Adrenal gland (tissue), 19 donors: ENCODE measurements at regions of chr1 and their contacts with region 1.

Region 1: GRCh38 chr1:244599937-244600350 is 53.0 kb upstream of the DESI2 start:
- DNase-seq: peak; percentile 60 to 78 (median 72)
- H3K4me3 ChIP-seq: peak overlapping the region in 1 of 4 donors; percentile 32
- H3K27ac ChIP-seq: peak overlapping the region in 3 of 5 donors; percentile 62 to 79 (median 73)
- H3K4me1 ChIP-seq: no peaks in the 10 kb centered on the region
- H3K27me3 ChIP-seq: no peaks in the 10 kb centered on the region
- CTCF ChIP-seq: no peak
- POLR2A ChIP-seq: peak in 1 of 2 donors; percentile 86

Region 2: GRCh38 chr1:245031041-245031440 is 431.1 kb after region 1 on chr1:
- intact Hi-C with region 1: loop called in 1 of 2 experiments (anchors 10 kb)
- DNase-seq: no peak
- H3K4me3 ChIP-seq: no peak overlapping the region
- H3K27ac ChIP-seq: no peak overlapping the region
- H3K4me1 ChIP-seq: no peaks in the 10 kb centered on the region
- H3K27me3 ChIP-seq: no peaks in the 10 kb centered on the region
- CTCF ChIP-seq: no peak
- POLR2A ChIP-seq: no peak